ENCODE measurements at regions of chr4 and their contacts with region 1.

Region 1: DNA sequence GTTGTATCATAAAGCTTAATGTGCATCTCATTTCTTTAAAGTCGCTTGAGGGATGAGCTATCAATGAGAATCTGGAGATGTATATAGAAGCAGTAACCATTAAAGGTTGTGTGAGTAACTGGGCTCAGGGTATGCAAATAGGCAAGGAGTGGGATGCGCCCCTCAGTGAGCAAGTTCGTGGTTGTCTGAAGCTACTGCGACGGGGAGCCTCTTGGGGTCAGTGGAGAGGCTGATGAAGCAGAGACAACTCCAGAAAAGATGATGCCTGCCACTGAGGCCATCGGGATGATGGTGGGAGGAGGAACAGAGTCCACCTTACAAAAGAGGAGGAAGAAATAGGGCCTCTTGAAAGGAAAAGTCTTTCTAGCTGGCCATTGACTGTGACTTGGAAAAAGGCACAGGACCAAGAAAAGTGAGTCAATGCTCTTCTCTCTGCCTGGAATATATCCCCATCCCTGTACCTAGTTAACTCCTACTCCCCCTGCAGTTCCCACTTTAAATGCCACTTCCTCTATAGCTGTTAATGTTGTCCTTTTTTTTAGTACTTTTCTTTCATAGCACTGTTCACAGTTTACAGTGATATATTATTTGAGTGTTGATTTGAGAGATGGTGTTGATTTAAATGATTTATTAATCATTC is 51.4 kb upstream of the LSM6 start:
- DNase-seq: no peak
- H3K4me3 Mint-ChIP-seq: peak overlapping the region; percentile 23
- H3K27ac Mint-ChIP-seq: peak overlapping the region; percentile 9
- H3K4me1 Mint-ChIP-seq: peaks cover 12% of the 10 kb centered on the region
- H3K27me3 Mint-ChIP-seq: peaks cover 9% of the 10 kb centered on the region

Region 2: DNA sequence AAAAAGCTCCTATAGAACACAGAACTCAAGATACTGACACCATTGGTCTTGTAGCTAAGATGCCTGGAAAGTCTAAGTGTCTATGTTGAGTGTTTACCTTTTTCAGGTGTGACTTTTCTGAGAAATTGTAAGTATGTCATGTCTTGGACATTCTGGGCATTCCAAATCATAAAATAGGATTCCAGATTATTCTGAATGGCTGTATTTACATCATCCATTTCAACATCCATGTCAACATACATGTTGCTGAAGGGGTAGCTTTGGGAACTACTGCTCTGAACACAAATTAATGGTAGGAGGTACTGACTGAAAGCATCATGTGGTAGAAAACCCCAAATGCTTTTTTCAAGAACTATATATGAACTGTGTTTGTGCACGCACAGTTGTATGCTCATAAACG is 17.6 kb before region 1 on chr4:
- intact Hi-C with region 1: loop called (anchors 2 kb)
- DNase-seq: no peak
- H3K4me3 Mint-ChIP-seq: no peak overlapping the region
- H3K27ac Mint-ChIP-seq: no peak overlapping the region
- H3K4me1 Mint-ChIP-seq: peaks cover 12% of the 10 kb centered on the region
- H3K27me3 Mint-ChIP-seq: peaks cover 5% of the 10 kb centered on the region

Region 3: DNA sequence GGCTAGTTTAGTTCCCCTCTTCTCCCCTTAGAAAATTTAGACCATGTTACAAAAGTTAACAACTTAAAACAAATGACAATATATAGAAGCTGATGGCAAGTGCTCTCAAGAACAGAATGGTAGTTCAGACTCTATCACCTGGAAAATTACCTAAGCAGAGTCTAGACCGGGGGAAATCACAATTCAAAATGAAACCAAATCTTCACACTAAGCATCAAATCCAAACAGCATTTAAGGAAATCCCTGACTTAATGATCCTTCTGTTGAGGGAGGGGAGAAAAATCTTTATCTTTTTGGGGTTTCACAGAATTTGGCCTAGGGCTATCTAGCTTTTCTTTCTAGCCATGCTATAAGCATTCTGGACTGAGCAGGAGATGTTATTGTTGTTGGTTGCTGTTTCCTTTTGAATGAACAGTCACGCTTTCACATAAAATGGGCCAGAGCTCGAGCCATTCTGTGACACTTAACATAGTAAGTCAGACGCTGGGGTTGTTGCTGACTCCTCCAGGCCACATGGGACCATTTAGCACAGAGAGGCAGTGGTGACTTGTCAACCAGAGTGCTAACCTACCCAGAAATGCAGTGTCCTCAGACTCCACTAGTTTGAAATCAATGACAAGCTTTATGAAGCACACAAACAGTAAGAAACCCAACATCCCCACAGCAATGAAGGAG is 35.4 kb after region 1 on chr4:
- intact Hi-C with region 1: loop called (anchors 5 kb)
- DNase-seq: no peak
- H3K4me3 Mint-ChIP-seq: no peak overlapping the region
- H3K27ac Mint-ChIP-seq: no peak overlapping the region
- H3K4me1 Mint-ChIP-seq: peaks cover 8% of the 10 kb centered on the region
- H3K27me3 Mint-ChIP-seq: peaks cover 2% of the 10 kb centered on the region